Aorta (tissue), 5 donors: ENCODE measurements at regions of chr22 and their contacts with region 1.

Region 1: DNA sequence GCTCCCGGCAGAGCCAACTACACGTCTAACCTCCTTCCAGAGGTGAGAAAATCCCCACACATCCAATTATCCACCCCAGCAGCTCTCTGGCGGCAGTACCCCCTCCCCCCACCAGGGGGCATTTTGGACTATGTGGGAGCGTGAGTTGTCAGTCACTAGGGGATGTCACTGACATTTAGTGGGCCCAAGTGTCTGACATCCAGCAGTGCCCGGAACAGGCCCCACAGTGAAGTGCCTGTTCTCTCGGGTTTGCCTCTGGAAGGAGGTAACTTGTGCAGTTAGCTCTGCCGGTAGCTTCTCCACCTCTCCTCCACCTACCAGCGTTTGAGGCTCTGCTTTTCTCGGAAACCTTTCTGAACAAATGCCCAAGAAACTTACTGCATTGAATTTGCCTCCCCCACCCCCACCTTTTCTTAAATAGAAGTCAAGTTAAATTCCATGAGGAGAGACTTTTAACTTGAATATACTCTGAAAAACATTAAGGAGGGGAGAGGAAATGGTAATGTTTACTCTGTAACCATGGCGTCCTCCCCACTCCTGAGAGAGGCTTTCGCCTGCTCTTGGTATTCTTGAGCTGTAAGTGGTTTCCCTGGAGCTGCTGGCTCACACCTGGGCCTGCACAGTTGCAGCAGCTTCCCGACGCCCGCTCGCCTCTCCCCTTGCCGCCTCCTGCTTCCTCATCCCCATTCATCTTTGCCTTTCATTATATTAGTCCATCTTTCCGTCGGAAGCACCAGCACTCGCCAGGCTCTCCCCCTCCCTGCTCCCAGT is 112.8 kb downstream of the WNT7B start:
- DNase-seq: peak; percentile 67 to 90
- ATAC-seq: peak; percentile 62
- H3K4me3 ChIP-seq: no peak overlapping the region
- H3K27ac ChIP-seq: no peak overlapping the region
- H3K4me1 ChIP-seq: no peaks in the 10 kb centered on the region
- H3K27me3 ChIP-seq: no peaks in the 10 kb centered on the region

Region 2: DNA sequence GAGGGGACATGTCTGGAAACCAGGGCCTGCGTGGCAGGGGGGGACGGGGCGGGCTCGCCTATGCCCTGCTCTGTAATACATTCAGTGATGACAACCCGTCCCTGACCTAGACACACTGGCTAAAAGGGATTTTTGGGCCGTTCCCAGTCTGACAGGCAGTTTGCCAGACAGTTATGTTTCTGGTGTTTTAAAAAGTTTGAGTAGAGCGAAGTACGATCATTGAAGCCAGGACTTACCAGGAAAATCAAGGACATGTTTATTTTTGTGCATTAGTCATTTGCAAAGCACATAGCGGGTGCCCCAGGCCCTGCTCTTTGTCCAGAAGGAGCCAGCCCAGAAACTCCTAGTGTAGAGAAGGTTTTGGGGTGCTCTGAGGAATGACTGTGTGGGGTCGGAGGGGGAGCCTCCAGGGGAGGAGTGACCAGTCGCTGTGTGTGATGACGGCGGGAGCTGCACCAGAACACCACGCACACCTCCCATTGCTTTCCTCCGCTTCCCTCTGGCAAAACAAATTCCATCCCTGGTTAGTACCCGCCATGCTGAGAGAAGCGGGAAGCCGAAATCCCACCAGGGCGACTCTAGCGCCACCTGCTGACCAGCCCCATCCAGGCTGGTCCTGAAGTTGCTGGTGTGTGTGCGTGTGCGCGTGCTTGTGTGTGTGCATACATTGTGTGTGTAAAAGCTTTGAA is 310.7 kb before region 1 on chr22:
- intact Hi-C with region 1: no loop called
- DNase-seq: peak; percentile 87 to 96
- ATAC-seq: peak; percentile 83
- H3K4me3 ChIP-seq: no peak overlapping the region
- H3K27ac ChIP-seq: peak overlapping the region; percentile 80 to 99
- H3K4me1 ChIP-seq: peaks cover 0 to 3% of the 10 kb centered on the region in 2 donors
- H3K27me3 ChIP-seq: no peaks in the 10 kb centered on the region

Region 3: GRCh38 chr22:45577746-45578523 is 286.2 kb before region 1 on chr22:
- intact Hi-C with region 1: loop called in 1 of 2 experiments (anchors 10 kb)
- DNase-seq: peak; percentile 88 to 95
- ATAC-seq: peak; percentile 74
- H3K4me3 ChIP-seq: no peak overlapping the region
- H3K27ac ChIP-seq: no peak overlapping the region
- H3K4me1 ChIP-seq: no peaks in the 10 kb centered on the region
- H3K27me3 ChIP-seq: peaks cover 0 to 2% of the 10 kb centered on the region in 2 donors